Vagina (tissue), 2 donors: ENCODE measurements at regions of chr2 and their contacts with region 1.

Region 1: DNA sequence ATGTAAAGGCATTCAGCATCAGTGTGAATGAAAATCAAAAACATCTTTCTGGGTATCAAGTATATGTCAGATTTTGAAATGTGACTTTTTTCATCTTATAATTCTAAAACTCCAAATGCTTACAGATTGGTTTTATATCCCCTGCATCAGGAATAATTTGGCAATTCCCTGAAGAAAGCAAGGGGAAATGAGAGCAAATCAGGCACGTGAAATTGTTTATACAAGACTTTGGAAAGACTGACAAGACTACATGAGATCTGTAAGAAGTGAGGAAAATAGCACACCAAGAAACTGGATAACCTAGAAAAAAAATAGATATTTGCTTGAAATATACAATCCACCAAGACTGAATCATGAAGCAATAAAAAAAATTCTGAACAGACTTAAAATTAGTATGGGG is 13.8 kb downstream of the COL6A3 start:
- DNase-seq: no peak
- H3K4me3 ChIP-seq: no peak overlapping the region
- H3K27ac ChIP-seq: peak overlapping the region; percentile 98
- H3K4me1 ChIP-seq: peaks cover 78% of the 10 kb centered on the region
- H3K27me3 ChIP-seq: no peaks in the 10 kb centered on the region
- CTCF ChIP-seq: no peak
- POLR2A ChIP-seq: no peak

Region 2: DNA sequence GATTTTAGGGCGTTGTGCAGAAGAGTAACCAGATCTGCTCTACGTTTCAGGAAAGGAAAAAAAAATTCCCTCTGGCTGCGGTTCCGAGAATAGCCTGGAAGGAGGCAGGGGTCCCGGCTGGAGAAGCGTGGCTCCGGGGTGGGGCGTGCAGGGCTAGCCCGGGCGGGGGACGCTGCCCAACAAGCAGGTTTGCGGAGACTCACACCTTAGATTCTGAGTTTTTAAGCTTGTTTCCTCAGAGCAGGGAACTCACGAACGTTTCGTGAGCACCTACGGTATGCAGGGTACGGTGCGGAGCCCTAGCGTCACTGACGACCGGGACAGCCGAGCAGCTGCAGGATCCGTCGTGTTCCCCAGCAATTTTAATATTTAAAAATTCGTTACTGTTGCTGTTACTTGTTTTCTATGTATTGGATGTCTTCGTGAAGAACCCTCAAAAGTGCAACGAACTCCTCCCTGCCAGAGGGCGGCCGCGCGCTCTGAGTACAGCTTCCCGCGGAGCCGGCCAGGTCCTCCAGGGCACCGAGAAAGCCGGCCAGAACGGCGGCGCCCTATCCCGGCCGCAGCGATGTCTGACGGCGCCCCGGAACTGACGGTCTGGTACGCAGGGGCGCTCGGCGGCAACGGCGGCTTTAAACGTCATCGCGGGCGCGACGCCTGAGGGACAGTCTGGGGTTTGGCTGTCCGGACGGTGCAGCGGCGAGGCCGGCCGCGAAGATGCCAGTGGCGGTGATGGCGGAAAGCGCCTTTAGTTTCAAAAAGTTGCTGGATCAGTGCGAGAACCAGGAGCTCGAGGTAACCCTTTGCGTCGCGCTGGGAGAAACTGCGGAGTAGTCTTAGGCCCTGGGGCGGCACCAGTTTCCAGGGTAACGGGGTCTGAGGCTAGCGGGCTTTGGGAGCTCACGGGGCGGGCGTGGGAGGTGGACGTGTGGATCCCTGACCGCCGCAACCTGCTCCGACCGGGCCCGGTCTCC is 314.7 kb before region 1 on chr2 and contains the start of gene COPS8:
- intact Hi-C with region 1: no loop called
- DNase-seq: no peak
- H3K4me3 ChIP-seq: peak within 1 kb of the TSS; percentile 78
- H3K27ac ChIP-seq: peak within 1 kb of the TSS; percentile 91
- H3K4me1 ChIP-seq: peaks cover 17% of the 10 kb centered on the region
- H3K27me3 ChIP-seq: no peaks in the 10 kb centered on the region
- CTCF ChIP-seq: peak in 2 of 3 experiments; percentile 5 to 34
- POLR2A ChIP-seq: peak in 1 of 2 donors; percentile 82
- total RNA-seq, gene COPS8: 46.9 TPM

Region 3: GRCh38 chr2:237141556-237141955 is 258.6 kb before region 1 on chr2:
- intact Hi-C with region 1: loop called (anchors 2 kb)
- DNase-seq: peak in 1 of 2 donors; percentile 92
- H3K4me3 ChIP-seq: no peak overlapping the region
- H3K27ac ChIP-seq: peak overlapping the region; percentile 77
- H3K4me1 ChIP-seq: peaks cover 23% of the 10 kb centered on the region
- H3K27me3 ChIP-seq: no peaks in the 10 kb centered on the region
- CTCF ChIP-seq: no peak
- POLR2A ChIP-seq: no peak

Region 4: DNA sequence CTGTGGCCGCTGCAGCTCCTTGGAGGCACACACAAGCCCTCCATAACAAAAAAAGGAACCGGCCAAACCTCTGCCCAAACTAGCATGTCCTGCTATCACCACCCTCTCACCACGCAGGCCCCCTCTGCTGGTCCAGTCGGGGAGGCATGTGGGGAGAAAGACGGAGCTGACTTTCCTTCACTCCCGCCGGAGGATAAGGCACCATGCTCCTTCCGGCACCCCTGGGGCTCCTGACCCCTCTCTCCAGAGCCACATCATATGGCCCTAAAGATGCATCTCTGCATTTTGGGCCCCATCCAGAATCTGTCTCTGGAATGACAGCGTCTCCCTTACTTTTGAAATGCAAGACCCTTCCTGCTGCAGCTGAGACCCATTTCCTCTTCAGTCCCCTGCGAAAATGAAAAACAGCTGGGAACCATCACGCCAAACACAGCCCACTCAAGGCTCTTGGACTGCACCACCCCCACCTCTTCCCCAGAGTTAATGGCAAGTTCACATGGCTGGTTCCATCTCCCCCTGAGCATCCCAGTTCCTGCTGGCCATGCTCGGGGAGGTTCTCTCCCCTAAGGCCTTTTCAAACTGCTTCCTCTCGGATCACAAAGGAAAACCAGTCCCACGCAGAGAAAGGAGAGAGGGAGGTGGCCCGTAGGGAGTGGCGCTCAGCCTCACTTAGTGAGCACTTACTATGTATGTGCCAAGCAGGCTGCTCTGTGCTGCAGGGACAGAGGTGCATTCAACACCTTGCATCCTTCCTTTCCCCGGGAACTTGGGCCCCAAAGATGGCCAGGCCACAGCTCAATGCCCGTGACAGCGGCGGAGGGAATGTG is 51.7 kb after region 1 on chr2:
- intact Hi-C with region 1: no loop called
- DNase-seq: no peak
- H3K4me3 ChIP-seq: no peak overlapping the region
- H3K27ac ChIP-seq: peak overlapping the region; percentile 92
- H3K4me1 ChIP-seq: peaks cover 36% of the 10 kb centered on the region
- H3K27me3 ChIP-seq: no peaks in the 10 kb centered on the region
- CTCF ChIP-seq: peak in 1 of 3 experiments; percentile 30
- POLR2A ChIP-seq: no peak